ENCODE measurements at regions of chr6 and their contacts with region 1.

Region 1: DNA sequence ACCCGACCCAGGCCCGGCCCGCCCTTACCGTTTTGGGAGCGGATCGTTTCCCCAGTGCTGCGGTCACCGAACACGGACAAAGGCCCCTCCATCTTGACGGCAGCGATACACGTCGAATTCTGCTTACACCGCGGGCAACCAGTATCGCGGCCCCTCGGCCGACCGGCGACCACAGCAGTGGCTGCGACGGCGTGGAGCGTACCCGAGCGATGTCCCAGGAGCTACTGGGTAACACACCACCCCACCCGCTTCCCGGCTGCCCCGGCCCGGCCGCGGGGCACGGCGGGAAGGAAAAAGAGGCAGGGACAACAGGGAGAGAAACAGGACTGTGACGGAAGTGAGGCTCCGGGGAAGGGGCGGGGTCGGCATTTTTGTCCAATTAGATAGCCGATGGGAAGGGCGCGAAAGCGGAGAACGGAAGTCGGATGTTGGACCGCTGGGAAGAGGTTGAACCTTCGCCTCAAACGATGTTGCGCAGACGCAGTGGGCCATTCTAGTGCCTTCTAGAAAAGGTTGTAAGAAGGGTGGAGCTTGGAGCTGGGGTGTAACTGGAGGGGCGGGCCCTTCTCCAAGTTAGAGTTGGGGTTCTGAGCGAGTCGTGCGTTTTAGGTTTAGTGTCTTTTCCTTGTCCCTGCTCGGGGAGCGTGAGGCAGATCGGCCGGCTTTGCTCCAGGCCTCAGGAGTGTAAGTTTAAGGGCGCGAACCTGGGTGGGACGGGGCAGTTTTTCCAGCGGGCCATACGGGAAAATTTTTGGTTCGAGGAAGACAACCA is at the start of gene TCP1:
- DNase-seq: peak; percentile 100
- ATAC-seq: peak; percentile 87
- H3K4me3 ChIP-seq: peak within 1 kb of the TSS; percentile 91 to 94 (median 93)
- H3K27ac ChIP-seq: peak within 1 kb of the TSS; percentile 91
- H3K4me1 ChIP-seq: peaks cover 71% of the 10 kb centered on the region
- H3K27me3 ChIP-seq: no peaks in the 10 kb centered on the region; a peak in 1 of 5 replicates
- CTCF ChIP-seq: peak; percentile 21; the same call in 1 of the 2 replicates
- EP300 ChIP-seq: peak in 1 of 2 experiments; percentile 92; a peak in 3 of 4 replicates
- POLR2A ChIP-seq: peak; percentile 96 to 98
- RAD21 ChIP-seq: peak; percentile 20; the same call in 1 of the 2 replicates
- total RNA-seq, gene TCP1: 553 and 677 TPM in 2 replicates

Region 2: DNA sequence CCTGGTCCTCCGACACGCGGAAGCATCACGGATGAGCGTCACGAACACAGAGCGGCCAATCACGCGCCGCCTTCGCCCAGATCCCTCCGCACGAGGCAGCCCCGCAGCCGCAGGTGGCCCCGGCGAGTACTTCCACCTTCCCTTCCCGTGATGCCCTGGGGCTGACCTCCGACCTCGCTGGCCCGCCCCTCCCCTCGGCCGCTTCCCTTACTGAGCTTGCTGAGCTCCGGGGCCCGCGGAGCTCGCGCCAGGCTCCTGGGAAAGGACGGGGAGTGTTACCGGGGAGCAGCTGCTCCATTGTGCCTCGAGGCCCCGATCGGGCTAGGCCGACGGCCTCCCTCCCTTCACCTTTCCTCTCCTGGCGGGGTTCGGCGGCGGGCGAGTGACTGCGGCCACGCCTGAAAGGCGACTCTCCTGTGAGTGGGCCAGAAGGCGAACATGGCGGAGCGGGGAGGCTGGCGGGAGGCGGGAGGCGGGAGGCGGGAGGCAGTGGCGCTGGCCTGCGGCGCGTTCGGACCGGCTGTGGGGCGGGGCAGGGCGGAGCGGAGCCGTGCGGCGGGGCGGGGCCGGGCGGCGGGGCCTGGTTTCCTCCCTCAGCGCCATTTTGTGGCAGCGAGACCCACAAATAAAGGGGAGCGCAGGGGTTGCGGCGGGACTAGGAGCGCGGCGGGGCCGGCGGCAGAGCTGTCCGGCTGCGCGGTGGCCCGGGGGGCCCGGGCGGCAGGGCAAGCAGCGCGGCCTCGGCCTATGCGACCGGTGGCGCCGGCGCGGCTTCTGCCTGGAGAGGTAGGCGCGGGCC is 62.4 kb before region 1 on chr6 and contains the start of gene WTAP:
- CTCF ChIA-PET with region 1: no interaction called
- POLR2A ChIA-PET with region 1: interaction called, 165 read pairs
- in situ Hi-C with region 1: loop called (anchors 5 kb)
- intact Hi-C with region 1: loop called (anchors 2 kb)
- DNase-seq: peak; percentile 95
- ATAC-seq: peak; percentile 89
- H3K4me3 ChIP-seq: peak within 1 kb of the TSS; percentile 88 to 99 (median 97)
- H3K27ac ChIP-seq: peak within 1 kb of the TSS; percentile 99
- H3K4me1 ChIP-seq: peaks cover 61% of the 10 kb centered on the region
- H3K27me3 ChIP-seq: no peaks in the 10 kb centered on the region; a peak in 1 of 5 replicates
- CTCF ChIP-seq: peak; percentile 40
- EP300 ChIP-seq: peak; percentile 5 to 64; a peak in 2 of 4 replicates
- POLR2A ChIP-seq: peak; percentile 86 to 97
- RAD21 ChIP-seq: peak; percentile 62
- total RNA-seq, gene WTAP: 167 and 203 TPM in 2 replicates

Region 3: GRCh38 chr6:159769470-159769869 is 20.1 kb before region 1 on chr6:
- CTCF ChIA-PET with region 1: no interaction called
- POLR2A ChIA-PET with region 1: interaction called, 142 read pairs
- in situ Hi-C with region 1: no loop called
- intact Hi-C with region 1: no loop called
- DNase-seq: no peak
- ATAC-seq: no peak
- H3K4me3 ChIP-seq: no peak overlapping the region
- H3K27ac ChIP-seq: no peak overlapping the region
- H3K4me1 ChIP-seq: peaks cover 37% of the 10 kb centered on the region
- H3K27me3 ChIP-seq: no peaks in the 10 kb centered on the region
- CTCF ChIP-seq: no peak
- EP300 ChIP-seq: no peak
- POLR2A ChIP-seq: no peak
- RAD21 ChIP-seq: no peak

Region 4: GRCh38 chr6:159806021-159806458 is 16.5 kb after region 1 on chr6:
- CTCF ChIA-PET with region 1: no interaction called
- POLR2A ChIA-PET with region 1: interaction called, 88 read pairs
- in situ Hi-C with region 1: no loop called
- intact Hi-C with region 1: loop called (anchors 2 kb)
- DNase-seq: peak; percentile 75
- ATAC-seq: peak; percentile 72
- H3K4me3 ChIP-seq: 0 out of 6 replicates have a peak overlapping the region, but pooled peaks of 1 of the 3 experiments have one; percentile 17
- H3K27ac ChIP-seq: no peak overlapping the region
- H3K4me1 ChIP-seq: peaks cover 32% of the 10 kb centered on the region
- H3K27me3 ChIP-seq: 0 out of 5 replicates have a peak, but pooled peaks cover 0 to 4% of the 10 kb centered on the region in 2 experiments
- CTCF ChIP-seq: no peak
- EP300 ChIP-seq: peak in 1 of 2 experiments; percentile 58; a peak in 1 of 4 replicates
- POLR2A ChIP-seq: no peak
- RAD21 ChIP-seq: no peak

Region 5: GRCh38 chr6:159842035-159842434 is 52.5 kb after region 1 on chr6:
- CTCF ChIA-PET with region 1: no interaction called
- POLR2A ChIA-PET with region 1: no interaction called
- in situ Hi-C with region 1: no loop called
- intact Hi-C with region 1: loop called (anchors 5 kb)
- DNase-seq: peak; percentile 51
- ATAC-seq: peak; percentile 79
- H3K4me3 ChIP-seq: no peak overlapping the region
- H3K27ac ChIP-seq: no peak overlapping the region
- H3K4me1 ChIP-seq: no peaks in the 10 kb centered on the region
- H3K27me3 ChIP-seq: peaks cover 1 to 24% of the 10 kb centered on the region in 2 experiments; a peak in 4 of 5 replicates
- CTCF ChIP-seq: peak; percentile 48
- EP300 ChIP-seq: no peak
- POLR2A ChIP-seq: no peak
- RAD21 ChIP-seq: no peak

Measured in HepG2 (cell line).